ENCODE measurements at regions of chr1 and their contacts with region 1.

Region 1: GRCh38 chr1:15272009-15272788 is 25.2 kb downstream of the FHAD1 start:
- DNase-seq: no peak
- ATAC-seq: peak; percentile 96
- H3K4me3 ChIP-seq: no peak overlapping the region
- H3K27ac ChIP-seq: no peak overlapping the region
- H3K4me1 ChIP-seq: no peaks in the 10 kb centered on the region
- H3K27me3 ChIP-seq: no peaks in the 10 kb centered on the region
- CTCF ChIP-seq: peak; percentile 75 to 89 (median 83)
- EP300 ChIP-seq: no peak
- POLR2A ChIP-seq: no peak
- RAD21 ChIP-seq: peak; percentile 97

Region 2: GRCh38 chr1:14923727-14924452 is 348.3 kb before region 1 on chr1:
- CTCF ChIA-PET with region 1: no interaction called
- POLR2A ChIA-PET with region 1: no interaction called
- RAD21 ChIA-PET with region 1: no interaction called
- SMC1A ChIA-PET with region 1: no interaction called
- in situ Hi-C with region 1: no loop called
- intact Hi-C with region 1: no loop called
- DNase-seq: no peak
- ATAC-seq: peak; percentile 72
- H3K4me3 ChIP-seq: no peak overlapping the region
- H3K27ac ChIP-seq: no peak overlapping the region
- H3K4me1 ChIP-seq: no peaks in the 10 kb centered on the region
- H3K27me3 ChIP-seq: peaks cover 2 to 15% of the 10 kb centered on the region in 2 experiments; a peak in 3 of 4 replicates
- CTCF ChIP-seq: no peak
- EP300 ChIP-seq: no peak
- POLR2A ChIP-seq: no peak
- RAD21 ChIP-seq: no peak

Region 3: DNA sequence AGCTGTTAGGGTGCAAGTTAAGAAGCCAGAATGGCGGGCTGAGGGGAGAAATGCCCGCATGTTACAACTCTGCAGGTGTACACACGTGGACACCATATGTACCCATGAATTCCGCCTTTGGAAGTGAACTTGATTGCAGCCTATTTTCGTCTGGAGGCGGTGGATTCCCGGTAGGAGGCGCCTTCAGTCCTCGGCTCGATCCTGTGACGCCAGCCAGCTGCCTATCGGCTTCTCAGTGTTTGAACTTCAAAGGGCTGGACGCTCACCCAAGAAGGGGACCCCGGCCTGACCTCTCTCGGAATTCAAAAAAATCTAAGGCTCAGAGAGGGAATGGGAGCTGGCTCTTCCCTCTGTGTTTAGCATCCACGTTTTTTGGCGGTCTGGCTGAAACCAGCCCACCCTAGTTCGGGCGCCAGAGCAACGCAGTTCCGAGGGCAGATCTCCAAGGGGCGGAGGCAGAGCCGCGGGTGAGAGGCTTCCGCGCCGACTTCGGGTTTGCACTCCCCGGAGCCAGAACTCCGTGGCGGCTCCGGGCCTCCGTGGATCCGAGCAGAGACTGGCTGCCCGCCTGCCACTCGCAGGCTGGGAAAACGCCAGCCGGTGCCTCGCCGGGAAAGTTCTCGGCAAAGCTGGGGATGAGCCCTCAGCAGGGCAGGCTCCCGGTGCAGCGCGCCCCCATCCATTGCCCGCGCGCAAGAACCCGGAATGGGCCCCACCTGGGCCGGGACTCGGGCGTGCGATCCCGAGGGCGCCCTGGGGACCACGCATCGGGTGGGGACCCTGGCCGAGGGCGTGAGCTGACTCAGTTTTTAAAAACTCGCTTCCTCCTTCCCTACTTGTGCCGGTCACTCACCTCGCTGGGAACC is 119.6 kb before region 1 on chr1:
- CTCF ChIA-PET with region 1: interaction called, 73 read pairs
- POLR2A ChIA-PET with region 1: no interaction called
- RAD21 ChIA-PET with region 1: interaction called, 49 read pairs
- SMC1A ChIA-PET with region 1: interaction called, 52 read pairs
- in situ Hi-C with region 1: no loop called
- intact Hi-C with region 1: loop called (anchors 1 kb)
- DNase-seq: no peak
- ATAC-seq: no peak
- H3K4me3 ChIP-seq: peak overlapping the region; percentile 67
- H3K27ac ChIP-seq: no peak overlapping the region
- H3K4me1 ChIP-seq: peaks cover 25% of the 10 kb centered on the region
- H3K27me3 ChIP-seq: peaks cover 10 to 16% of the 10 kb centered on the region in 2 experiments; a peak in 3 of 4 replicates
- CTCF ChIP-seq: peak; percentile 26 to 72 (median 30); a peak in 4 of 6 replicates
- EP300 ChIP-seq: no peak
- POLR2A ChIP-seq: no peak
- RAD21 ChIP-seq: peak; percentile 61

Region 4: DNA sequence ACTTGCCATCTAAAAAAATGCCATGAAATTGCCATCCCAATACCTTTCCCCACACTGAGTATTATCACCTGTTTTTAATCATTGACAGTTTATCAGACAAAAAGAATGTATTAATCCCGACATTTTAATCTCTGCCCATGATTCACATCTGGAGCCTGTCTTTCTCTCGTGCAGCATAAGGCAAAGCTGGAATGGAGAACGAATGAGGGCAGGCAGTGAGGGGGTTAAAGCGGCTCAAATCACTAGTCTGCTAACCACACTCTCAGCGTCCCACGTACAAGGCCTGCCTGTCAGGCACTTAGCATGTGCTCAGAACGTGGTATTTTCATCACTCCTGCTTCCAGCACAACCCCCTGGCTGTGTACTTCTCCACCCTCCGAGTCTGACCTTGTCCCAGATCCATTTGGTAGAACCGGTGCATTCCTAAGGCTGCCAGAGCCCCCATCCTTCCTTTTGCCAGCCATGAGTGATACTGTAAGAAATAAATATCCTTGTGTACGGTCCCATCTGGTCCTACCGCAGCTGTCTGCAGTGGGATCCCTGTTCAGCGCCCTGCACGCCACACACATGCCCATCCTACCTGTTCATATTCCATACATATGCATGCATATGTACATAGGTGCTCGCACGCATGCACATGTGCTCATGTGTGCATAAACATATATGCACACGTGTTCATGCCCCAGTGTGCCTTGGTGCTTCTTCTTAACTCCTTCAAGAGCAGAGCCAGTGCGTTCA is 59.8 kb before region 1 on chr1:
- CTCF ChIA-PET with region 1: interaction called, 11 read pairs
- POLR2A ChIA-PET with region 1: no interaction called
- RAD21 ChIA-PET with region 1: interaction called, 3 read pairs
- SMC1A ChIA-PET with region 1: interaction called, 5 read pairs
- in situ Hi-C with region 1: no loop called
- intact Hi-C with region 1: no loop called
- DNase-seq: no peak
- ATAC-seq: no peak
- H3K4me3 ChIP-seq: no peak overlapping the region
- H3K27ac ChIP-seq: no peak overlapping the region
- H3K4me1 ChIP-seq: no peaks in the 10 kb centered on the region; the same call in 1 of the 2 replicates
- H3K27me3 ChIP-seq: no peaks in the 10 kb centered on the region
- CTCF ChIP-seq: no peak
- EP300 ChIP-seq: no peak
- POLR2A ChIP-seq: no peak
- RAD21 ChIP-seq: no peak

Region 5: DNA sequence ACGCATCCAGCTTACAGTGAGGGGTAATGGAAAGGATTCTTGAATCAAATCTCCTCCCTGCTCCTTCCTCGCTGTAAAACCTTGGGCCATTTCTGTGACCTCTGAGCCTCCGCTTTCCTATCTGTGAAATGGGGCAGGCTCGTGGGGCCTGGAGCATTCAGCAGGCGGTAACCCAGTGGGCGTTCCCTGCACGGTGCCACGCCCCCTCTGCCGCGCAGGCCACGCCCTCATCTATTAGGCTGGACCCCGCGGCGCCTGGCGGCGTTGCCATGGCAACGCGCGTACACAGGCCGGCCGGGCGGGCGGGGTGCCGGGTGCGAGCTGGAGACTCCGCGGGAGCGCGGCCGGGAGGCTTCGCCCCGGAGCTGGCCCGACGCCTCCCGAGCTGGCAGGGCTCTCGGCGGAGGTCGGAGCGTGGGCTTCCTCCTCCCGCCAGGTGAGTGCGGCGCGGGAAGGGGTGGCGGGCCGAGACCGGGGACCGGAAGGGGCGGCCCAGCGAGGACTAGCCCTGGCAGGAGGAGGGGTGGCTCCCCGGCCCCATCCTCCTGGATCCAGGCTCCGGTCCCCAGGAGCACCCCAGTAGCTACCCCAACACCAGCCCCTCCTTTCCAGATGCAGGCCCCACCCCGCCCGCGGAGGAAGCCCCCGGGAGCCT is 25.1 kb before region 1 on chr1 and contains the start of gene FHAD1:
- CTCF ChIA-PET with region 1: interaction called, 20 read pairs
- POLR2A ChIA-PET with region 1: interaction called, 3 read pairs
- RAD21 ChIA-PET with region 1: interaction called, 18 read pairs
- SMC1A ChIA-PET with region 1: interaction called, 9 read pairs
- in situ Hi-C with region 1: no loop called
- intact Hi-C with region 1: no loop called
- DNase-seq: no peak
- ATAC-seq: peak; percentile 73
- H3K4me3 ChIP-seq: peak within 1 kb of the TSS; percentile 28; the same call in 1 of the 2 replicates
- H3K27ac ChIP-seq: no peak within 1 kb of the TSS
- H3K4me1 ChIP-seq: peaks cover 20% of the 10 kb centered on the region
- H3K27me3 ChIP-seq: no peaks in the 10 kb centered on the region
- CTCF ChIP-seq: no peak
- EP300 ChIP-seq: no peak
- POLR2A ChIP-seq: no peak
- RAD21 ChIP-seq: no peak
- polyA plus RNA-seq, gene FHAD1: 0.09 TPM in 1 of 2 experiments, not detected in the other

Region 6: GRCh38 chr1:15261155-15262002 is 10.8 kb before region 1 on chr1:
- CTCF ChIA-PET with region 1: interaction called, 22 read pairs
- POLR2A ChIA-PET with region 1: interaction called, 4 read pairs
- RAD21 ChIA-PET with region 1: interaction called, 17 read pairs
- SMC1A ChIA-PET with region 1: interaction called, 46 read pairs
- in situ Hi-C with region 1: no loop called
- intact Hi-C with region 1: no loop called
- DNase-seq: no peak
- ATAC-seq: peak; percentile 78
- H3K4me3 ChIP-seq: peak overlapping the region; percentile 25; the same call in 1 of the 2 replicates
- H3K27ac ChIP-seq: peak overlapping the region; percentile 63
- H3K4me1 ChIP-seq: peaks cover 21% of the 10 kb centered on the region
- H3K27me3 ChIP-seq: no peaks in the 10 kb centered on the region
- CTCF ChIP-seq: no peak
- EP300 ChIP-seq: 0 out of 4 replicates have a peak, but pooled peaks of 1 of the 2 experiments have one; percentile 3
- POLR2A ChIP-seq: no peak
- RAD21 ChIP-seq: no peak